SK-N-SH (cell line): ENCODE measurements at regions of chr11 and their contacts with region 1.

Region 1: GRCh38 chr11:126282736-126283591 is at the start of gene TIRAP:
- DNase-seq: peak; percentile 90
- H3K4me3 ChIP-seq: peak within 1 kb of the TSS; percentile 62 to 75
- H3K27ac ChIP-seq: peak within 1 kb of the TSS; percentile 69 to 82
- H3K4me1 ChIP-seq: peaks cover 9 to 13% of the 10 kb centered on the region in 2 experiments; a peak in 1 of 4 replicates
- H3K27me3 ChIP-seq: no peaks in the 10 kb centered on the region
- CTCF ChIP-seq: no peak
- EP300 ChIP-seq: no peak
- RAD21 ChIP-seq: no peak
- polyA plus RNA-seq, gene TIRAP: 5.5 and 6.2 TPM in 2 replicates

Region 2: DNA sequence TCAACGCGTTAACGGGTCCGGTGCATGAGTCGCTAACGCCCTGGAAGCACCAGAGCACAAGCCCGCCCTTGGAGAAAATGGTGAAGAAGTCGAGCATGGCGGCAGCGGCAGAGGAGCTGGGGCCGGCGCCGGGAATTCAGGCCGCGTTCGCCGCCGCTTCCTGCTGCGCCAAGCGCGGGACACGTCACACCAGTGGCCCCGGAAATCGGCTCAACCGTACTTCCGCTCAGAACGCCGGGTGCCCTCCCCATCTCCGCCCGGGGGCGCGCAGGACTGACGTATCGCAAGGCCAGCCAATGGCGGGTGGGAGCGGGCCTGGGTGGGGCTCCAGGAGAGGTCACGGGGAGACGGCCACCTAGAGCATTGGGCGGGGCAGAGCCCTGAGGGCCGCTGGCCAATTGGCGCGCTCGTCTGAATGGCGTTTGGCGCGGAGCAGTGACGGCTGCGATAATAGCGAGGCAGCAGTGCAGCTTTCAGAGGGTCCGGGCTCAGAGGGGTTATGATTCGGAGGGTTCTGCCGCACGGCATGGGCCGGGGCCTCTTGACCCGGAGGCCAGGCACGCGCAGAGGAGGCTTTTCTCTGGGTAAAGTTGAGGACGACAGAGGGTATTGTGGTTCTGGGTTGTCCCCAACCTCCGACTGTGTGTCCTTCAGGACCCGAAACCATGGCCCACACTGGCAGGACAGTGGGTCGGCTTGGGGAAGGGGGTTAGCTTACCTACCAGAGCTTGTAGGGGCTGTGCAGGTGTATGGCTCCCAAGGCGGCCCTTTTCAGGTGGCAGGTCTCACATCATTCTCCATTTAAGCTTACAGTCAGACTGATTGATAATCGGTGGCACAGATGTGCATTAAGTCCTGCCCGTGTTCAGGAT is 14.0 kb before region 1 on chr11 and contains the starts of genes FOXRED1 and SRPRA:
- CTCF ChIA-PET with region 1: no interaction called
- POLR2A ChIA-PET with region 1: interaction called, 12 read pairs
- DNase-seq: peak; percentile 100
- H3K4me3 ChIP-seq: peak within 1 kb of the TSS; percentile 72 to 94
- H3K27ac ChIP-seq: peak within 1 kb of the TSS; percentile 87 to 95
- H3K4me1 ChIP-seq: peaks cover 9 to 12% of the 10 kb centered on the region in 2 experiments
- H3K27me3 ChIP-seq: no peaks in the 10 kb centered on the region
- CTCF ChIP-seq: no peak
- EP300 ChIP-seq: no peak
- RAD21 ChIP-seq: no peak
- polyA plus RNA-seq, gene FOXRED1: 35.2 and 41.3 TPM in 2 replicates
- polyA plus RNA-seq, gene SRPRA: 129 and 158 TPM in 2 replicates

Region 3: DNA sequence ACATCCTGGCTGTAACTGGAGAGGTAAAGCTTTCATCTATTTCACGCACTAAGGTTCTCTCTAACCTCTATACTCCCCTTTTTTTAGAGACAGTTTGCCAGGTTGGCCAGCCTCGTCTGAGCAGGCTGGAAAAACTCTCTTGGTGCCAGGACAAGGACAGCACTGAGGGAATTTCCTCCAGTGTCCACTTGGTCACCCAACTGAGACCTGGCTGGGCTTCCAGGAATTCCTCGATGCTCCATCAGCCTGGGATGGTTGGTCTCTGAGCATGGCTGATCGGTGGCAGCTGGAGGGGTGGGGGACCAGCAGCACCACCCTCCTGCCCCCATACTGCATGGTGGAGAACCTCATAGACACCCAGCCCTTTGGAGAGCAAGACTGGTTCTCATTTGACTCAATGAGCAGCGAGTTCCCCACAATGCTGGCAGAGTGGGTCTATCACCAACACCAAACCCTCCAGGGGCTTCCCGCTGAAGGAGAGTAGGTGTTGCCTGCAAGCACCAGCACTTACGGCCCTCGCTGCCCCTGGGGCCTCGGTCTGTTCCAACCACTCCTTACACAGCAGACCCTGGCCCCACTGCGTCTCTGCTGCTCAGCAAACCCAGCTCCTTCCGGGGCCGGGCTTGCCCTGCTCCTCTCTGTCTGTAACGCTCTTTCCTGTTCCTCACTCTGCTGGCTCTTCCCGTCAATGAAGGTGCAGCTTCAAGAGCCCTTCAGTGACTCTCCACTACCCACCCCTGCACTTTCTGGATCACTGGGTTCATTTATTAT is 194.8 kb after region 1 on chr11:
- CTCF ChIA-PET with region 1: no interaction called
- POLR2A ChIA-PET with region 1: no interaction called
- DNase-seq: no peak
- H3K4me3 ChIP-seq: no peak overlapping the region
- H3K27ac ChIP-seq: no peak overlapping the region
- H3K4me1 ChIP-seq: peaks cover 0 to 4% of the 10 kb centered on the region in 2 experiments; a peak in 1 of 4 replicates
- H3K27me3 ChIP-seq: no peaks in the 10 kb centered on the region
- CTCF ChIP-seq: no peak
- EP300 ChIP-seq: no peak
- RAD21 ChIP-seq: no peak